Calu3 (cell line): ENCODE measurements at regions of chr6 and their contacts with region 1.

Region 1: DNA sequence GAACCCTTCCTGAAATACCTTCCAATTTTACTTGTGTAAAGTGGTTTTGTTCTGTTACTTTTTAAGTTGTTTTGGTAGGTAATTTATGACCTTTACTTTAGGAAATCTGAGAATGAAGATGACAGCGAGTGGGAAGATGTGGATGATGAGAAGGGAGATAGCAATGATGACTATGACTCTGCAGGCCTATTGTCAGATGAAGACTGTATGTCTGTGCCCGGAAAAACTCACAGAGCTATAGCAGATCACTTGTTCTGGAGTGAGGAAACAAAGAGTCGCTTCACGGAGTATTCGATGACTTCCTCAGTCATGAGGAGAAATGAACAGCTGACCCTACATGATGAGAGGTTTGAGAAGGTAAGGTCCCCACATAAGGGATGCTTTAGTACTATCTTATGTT is 6.6 kb upstream of the ZC2HC1B start:
- DNase-seq: no peak
- H3K4me3 Mint-ChIP-seq: no peak overlapping the region
- H3K27ac Mint-ChIP-seq: no peak overlapping the region
- H3K4me1 Mint-ChIP-seq: peaks cover 10% of the 10 kb centered on the region
- H3K27me3 Mint-ChIP-seq: no peaks in the 10 kb centered on the region
- CTCF ChIP-seq: no peak

Region 2: DNA sequence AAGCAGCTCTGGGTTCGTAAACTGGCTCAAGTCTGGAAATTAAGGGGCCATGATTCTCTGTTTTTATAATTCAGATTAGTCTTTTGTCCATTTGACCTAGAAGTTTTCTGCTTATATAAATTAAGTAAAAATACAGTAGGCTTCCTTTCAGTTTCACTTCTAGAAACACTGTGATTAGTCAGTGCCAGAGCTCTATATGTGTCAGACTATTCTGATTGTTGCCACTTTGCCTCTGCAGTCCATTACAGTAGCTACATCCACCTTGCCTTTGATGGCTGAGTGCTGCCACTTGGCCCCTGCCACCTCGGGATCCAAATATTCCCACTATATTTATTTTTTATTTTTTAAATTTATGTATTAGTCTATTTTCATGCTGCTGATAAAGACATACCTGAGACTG is 14.6 kb after region 1 on chr6:
- CTCF ChIA-PET with region 1: no interaction called
- intact Hi-C with region 1: loop called (anchors 2 kb)
- DNase-seq: no peak
- H3K4me3 Mint-ChIP-seq: no peak overlapping the region
- H3K27ac Mint-ChIP-seq: no peak overlapping the region
- H3K4me1 Mint-ChIP-seq: no peaks in the 10 kb centered on the region
- H3K27me3 Mint-ChIP-seq: no peaks in the 10 kb centered on the region
- CTCF ChIP-seq: no peak